ENCODE measurements at regions of chr19 and their contacts with region 1.

Region 1: GRCh38 chr19:49676690-49677231 is 310 bp upstream of the PRMT1 start:
- DNase-seq: peak; percentile 84 to 99 (median 97)
- ATAC-seq: peak; percentile 87
- H3K4me3 ChIP-seq: peak overlapping the region; percentile 86
- H3K4me3 Mint-ChIP-seq: peak overlapping the region; percentile 91 to 100 (median 98)
- H3K27ac ChIP-seq: peak overlapping the region; percentile 95
- H3K27ac Mint-ChIP-seq: peak overlapping the region; percentile 93 to 100 (median 99)
- H3K4me1 ChIP-seq: peaks cover 18 to 23% of the 10 kb centered on the region in 2 donors
- H3K4me1 Mint-ChIP-seq: peaks cover 18 to 50% (median 43%) of the 10 kb centered on the region in 7 donors
- H3K27me3 ChIP-seq: no peaks in the 10 kb centered on the region
- H3K27me3 Mint-ChIP-seq: no peaks in the 10 kb centered on the region

Region 2: DNA sequence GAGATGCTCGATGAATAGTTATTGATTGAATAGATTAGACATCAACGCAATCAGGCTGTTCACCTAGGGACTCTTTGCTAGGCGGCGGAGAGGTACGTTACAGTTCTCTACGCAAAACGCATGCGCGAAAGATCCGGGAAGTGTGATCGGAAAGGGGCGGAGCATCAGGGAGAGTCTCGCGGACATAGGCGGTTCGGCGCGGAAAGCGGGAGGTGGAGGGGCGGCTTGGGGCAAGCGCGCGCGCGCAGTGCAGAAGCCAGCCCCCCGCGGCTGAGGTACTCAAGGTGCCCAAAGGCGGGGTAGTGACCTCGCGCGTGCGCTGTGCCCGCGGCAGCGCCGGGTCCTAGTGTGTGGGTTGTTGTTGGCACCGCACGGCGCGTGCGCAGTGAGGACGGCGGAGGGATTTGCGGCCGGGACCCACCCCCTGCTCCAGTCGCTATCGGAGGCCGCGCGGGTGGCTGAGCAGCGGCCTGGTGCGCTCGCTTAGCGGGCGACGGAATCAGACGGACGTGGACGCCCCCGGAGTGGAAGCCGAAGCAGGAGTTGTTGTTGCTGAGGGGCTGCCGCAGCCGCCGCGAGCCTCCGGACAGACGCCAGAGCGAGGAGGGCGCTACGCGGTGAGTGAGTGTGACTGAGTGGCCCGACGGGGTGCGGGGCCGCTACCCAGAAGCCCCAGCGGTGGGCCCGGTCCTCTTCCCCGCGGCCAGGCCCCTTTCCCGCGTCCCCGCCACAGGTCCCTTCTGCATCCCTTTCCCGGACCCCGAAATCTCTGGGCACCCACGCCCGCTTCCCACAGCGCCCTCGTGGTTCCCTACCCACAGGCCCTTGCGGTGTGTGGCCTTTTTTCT is 591.5 kb before region 1 on chr19 and contains the start of gene SNRNP70:
- CTCF ChIA-PET with region 1: no interaction called
- POLR2A ChIA-PET with region 1: no interaction called
- intact Hi-C with region 1: loop called in 1 of 2 experiments (anchors 1 kb)
- DNase-seq: peak; percentile 99 to 100 (median 100)
- ATAC-seq: peak; percentile 97
- H3K4me3 ChIP-seq: peak within 1 kb of the TSS; percentile 72
- H3K4me3 Mint-ChIP-seq: peak within 1 kb of the TSS; percentile 71 to 97 (median 94)
- H3K27ac ChIP-seq: peak within 1 kb of the TSS; percentile 94
- H3K27ac Mint-ChIP-seq: peak within 1 kb of the TSS; percentile 83 to 96 (median 88)
- H3K4me1 ChIP-seq: peaks cover 19% of the 10 kb centered on the region in 2 donors
- H3K4me1 Mint-ChIP-seq: peaks cover 18 to 49% (median 35%) of the 10 kb centered on the region in 7 donors
- H3K27me3 ChIP-seq: no peaks in the 10 kb centered on the region
- H3K27me3 Mint-ChIP-seq: peaks cover 0 to 5% (median 4%) of the 10 kb centered on the region in 5 donors
- total RNA-seq, gene SNRNP70: 243 to 837 (median 449) TPM

Region 3: DNA sequence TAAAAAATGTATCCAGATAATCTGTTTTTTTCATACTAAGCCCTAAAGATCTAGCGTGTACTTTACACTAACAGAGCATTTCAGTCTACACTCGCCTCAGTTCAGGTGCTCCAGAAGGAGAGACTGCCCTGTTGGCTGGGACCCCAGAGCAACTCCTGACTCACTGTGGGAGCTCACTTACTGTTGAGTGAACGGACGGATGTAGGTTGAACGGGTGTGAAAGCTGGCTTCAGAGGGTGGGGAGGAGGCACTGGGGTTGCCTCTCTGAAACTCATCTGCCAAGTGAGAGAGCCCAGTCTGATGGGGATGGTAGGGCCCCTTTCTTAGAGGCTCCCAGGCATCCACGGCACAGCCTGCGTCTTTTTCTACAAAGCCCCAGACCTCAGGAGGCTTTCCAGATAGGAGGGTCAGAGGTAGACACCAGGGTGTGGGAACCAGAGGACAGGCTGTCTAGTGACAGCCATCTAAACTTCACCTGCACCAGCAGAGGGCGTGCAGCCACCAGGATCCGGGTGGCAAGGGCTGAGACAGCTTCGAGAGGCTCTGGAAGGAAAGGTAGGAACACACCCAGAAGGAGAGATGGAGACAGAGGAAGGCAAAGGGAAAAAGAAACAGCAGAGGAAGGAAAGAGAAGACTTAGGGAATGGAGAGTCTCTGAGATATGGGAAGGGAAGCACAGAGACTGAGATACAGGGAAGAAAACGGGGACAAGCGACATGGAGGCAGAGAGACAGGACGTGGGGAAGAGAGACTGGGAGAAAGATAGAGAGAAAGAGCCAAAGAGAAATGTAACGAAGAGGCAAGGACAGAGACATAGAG is 285.0 kb before region 1 on chr19:
- CTCF ChIA-PET with region 1: interaction called, 3 read pairs
- POLR2A ChIA-PET with region 1: no interaction called
- intact Hi-C with region 1: loop called (anchors 1 to 5 kb)
- DNase-seq: peak; percentile 61 to 82 (median 74)
- ATAC-seq: peak; percentile 89
- H3K4me3 ChIP-seq: no peak overlapping the region
- H3K4me3 Mint-ChIP-seq: peak overlapping the region in 2 of 10 donors; percentile 3 to 51
- H3K27ac ChIP-seq: no peak overlapping the region
- H3K27ac Mint-ChIP-seq: peak overlapping the region in 6 of 9 donors; percentile 1 to 84 (median 54)
- H3K4me1 ChIP-seq: peaks cover 7 to 13% of the 10 kb centered on the region in 2 donors
- H3K4me1 Mint-ChIP-seq: peaks cover 6 to 26% (median 10%) of the 10 kb centered on the region in 7 donors
- H3K27me3 ChIP-seq: no peaks in the 10 kb centered on the region
- H3K27me3 Mint-ChIP-seq: peaks cover 0 to 11% (median 3%) of the 10 kb centered on the region in 5 donors

Region 4: DNA sequence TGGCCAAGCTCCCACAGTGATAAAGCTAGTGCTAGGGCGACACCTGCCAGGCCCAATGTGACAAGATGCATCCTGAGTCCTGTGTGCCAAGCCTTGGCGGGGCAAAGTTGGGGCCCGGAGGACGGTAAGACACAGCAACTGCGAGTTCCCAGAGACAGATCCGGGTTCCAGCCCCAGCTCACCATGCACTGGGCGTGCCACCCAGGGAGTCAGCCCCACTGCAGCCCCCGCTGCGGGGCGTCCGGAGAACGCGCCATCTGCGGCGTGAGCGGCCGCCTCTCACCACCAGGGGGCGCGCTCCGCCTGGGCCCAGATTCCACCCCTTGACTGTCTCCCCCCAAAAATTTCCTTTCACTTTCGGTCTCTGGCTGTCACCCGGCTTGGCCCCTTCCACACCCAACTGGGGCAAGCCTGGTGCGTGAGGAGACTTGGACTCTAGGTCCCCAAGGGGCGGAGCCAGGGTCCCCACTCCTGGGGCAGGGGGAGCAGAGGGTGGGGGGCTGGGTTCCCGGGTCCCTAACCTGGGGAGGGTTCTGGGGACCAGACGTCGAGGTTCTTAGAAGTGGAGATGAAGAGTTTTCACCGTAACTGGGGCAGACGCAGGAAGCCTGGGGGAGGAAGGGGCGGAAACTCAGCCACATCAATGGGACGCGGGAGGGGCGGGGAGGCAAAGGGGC is 202.8 kb before region 1 on chr19 and contains the start of gene FLT3LG:
- CTCF ChIA-PET with region 1: interaction called, 7 read pairs
- POLR2A ChIA-PET with region 1: interaction called, 6 read pairs
- intact Hi-C with region 1: loop called (anchors 1 kb)
- DNase-seq: peak; percentile 91 to 98 (median 96)
- ATAC-seq: peak; percentile 72
- H3K4me3 ChIP-seq: peak within 1 kb of the TSS; percentile 87
- H3K4me3 Mint-ChIP-seq: peak within 1 kb of the TSS; percentile 91 to 100 (median 96)
- H3K27ac ChIP-seq: peak within 1 kb of the TSS; percentile 99
- H3K27ac Mint-ChIP-seq: peak within 1 kb of the TSS; percentile 95 to 100 (median 98)
- H3K4me1 ChIP-seq: peaks cover 50 to 52% of the 10 kb centered on the region in 2 donors
- H3K4me1 Mint-ChIP-seq: peaks cover 18 to 62% (median 51%) of the 10 kb centered on the region in 7 donors
- H3K27me3 ChIP-seq: no peaks in the 10 kb centered on the region
- H3K27me3 Mint-ChIP-seq: no peaks in the 10 kb centered on the region
- total RNA-seq, gene FLT3LG: 90.6 to 401 (median 280) TPM

Region 5: GRCh38 chr19:49570138-49570856 is 106.5 kb before region 1 on chr19:
- CTCF ChIA-PET with region 1: interaction called, 13 read pairs
- POLR2A ChIA-PET with region 1: interaction called, 34 read pairs
- intact Hi-C with region 1: loop called (anchors 1 to 2 kb)
- DNase-seq: peak in 7 of 9 donors; percentile 75 to 88 (median 83)
- ATAC-seq: peak; percentile 64
- H3K4me3 ChIP-seq: no peak overlapping the region
- H3K4me3 Mint-ChIP-seq: peak overlapping the region; percentile 64 to 80 (median 75)
- H3K27ac ChIP-seq: peak overlapping the region; percentile 56
- H3K27ac Mint-ChIP-seq: peak overlapping the region; percentile 86 to 99 (median 93)
- H3K4me1 ChIP-seq: peaks cover 37 to 53% of the 10 kb centered on the region in 2 donors
- H3K4me1 Mint-ChIP-seq: peaks cover 34 to 70% (median 61%) of the 10 kb centered on the region in 7 donors
- H3K27me3 ChIP-seq: no peaks in the 10 kb centered on the region
- H3K27me3 Mint-ChIP-seq: peaks cover 0 to 2% (median 0%) of the 10 kb centered on the region in 5 donors

Region 6: DNA sequence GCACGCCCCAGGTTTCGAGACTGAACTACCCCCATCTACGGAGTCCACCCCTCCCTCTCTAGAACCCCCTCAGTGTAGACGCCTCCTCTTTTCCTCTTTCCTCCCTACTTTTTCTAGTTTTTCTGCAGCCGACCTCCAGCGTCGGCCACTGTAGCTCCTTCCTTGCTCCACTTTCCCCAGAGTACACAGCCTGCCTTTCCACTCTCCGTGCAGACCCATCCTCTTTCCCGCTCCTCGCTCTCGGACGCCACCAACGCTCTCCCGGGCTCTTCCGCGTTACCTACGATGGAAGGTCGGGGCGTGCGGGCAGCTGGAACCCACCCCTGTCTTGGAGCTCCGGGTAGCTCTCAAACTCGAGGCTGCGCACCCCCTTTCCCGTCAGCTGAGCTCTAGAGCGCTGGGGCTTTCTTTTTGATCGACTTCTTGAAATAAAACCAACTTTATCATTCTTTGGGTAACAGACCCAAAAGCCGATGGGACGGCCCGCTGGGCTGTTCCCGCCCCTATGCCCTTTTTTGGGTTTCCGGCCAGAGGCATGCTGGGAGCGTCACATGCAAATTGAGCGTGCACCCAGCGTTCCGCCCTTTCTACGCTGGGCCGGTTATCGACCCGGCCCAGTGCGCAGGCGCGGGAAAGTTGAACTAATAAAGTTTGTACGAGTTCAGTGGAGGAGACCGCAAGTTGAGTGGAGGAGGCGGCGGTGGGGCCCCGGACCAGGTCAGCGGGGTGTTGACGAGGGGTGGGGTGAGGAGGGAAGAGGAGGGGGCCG is 11.2 kb before region 1 on chr19 and contains the starts of genes BCL2L12 and IRF3:
- CTCF ChIA-PET with region 1: interaction called, 4 read pairs
- POLR2A ChIA-PET with region 1: interaction called, 91 read pairs
- intact Hi-C with region 1: loop called (anchors 1 kb)
- DNase-seq: peak; percentile 99
- ATAC-seq: peak; percentile 90
- H3K4me3 ChIP-seq: peak within 1 kb of the TSS; percentile 95
- H3K4me3 Mint-ChIP-seq: peak within 1 kb of the TSS; percentile 97 to 100 (median 99)
- H3K27ac ChIP-seq: peak within 1 kb of the TSS; percentile 80
- H3K27ac Mint-ChIP-seq: peak within 1 kb of the TSS; percentile 96 to 99 (median 97)
- H3K4me1 ChIP-seq: peaks cover 23% of the 10 kb centered on the region in 2 donors
- H3K4me1 Mint-ChIP-seq: peaks cover 24 to 47% (median 39%) of the 10 kb centered on the region in 7 donors
- H3K27me3 ChIP-seq: no peaks in the 10 kb centered on the region
- H3K27me3 Mint-ChIP-seq: peaks cover 0 to 2% (median 0%) of the 10 kb centered on the region in 5 donors
- total RNA-seq, gene BCL2L12: 11.3 to 57.2 (median 22.6) TPM
- total RNA-seq, gene IRF3: 176 to 346 (median 212) TPM

Region 7: DNA sequence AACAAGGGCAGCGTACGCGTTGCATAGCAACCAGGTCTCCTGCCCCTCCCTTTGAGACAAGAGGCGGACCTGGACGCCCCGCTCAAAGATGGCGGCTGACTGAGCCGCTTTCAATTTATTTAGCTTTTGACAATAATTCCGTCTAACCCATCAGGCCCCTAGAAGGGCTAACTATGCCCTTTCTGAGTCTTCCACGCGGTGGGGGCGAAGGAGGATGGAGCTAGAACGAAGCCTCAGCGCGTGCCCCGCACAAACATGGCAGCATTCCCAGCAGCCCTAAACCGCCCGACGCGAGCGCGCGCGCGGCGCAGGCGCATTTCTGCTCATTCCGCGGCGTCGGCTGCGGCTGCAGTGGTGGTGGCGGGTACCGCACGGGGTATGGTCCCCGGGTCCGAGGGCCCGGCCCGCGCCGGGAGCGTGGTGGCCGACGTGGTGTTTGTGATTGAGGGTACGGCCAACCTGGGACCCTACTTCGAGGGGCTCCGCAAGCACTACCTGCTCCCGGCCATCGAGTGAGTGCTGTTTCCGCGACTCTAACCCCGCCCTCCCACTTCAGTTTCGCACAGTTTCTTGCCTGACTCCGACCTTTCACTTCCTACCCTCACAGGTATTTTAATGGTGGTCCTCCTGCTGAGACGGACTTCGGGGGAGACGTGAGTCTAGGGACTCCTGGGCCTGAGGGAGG is 141.3 kb after region 1 on chr19 and contains the start of gene MED25:
- CTCF ChIA-PET with region 1: no interaction called
- POLR2A ChIA-PET with region 1: no interaction called
- intact Hi-C with region 1: loop called (anchors 1 to 5 kb)
- DNase-seq: peak; percentile 87 to 96 (median 94)
- ATAC-seq: peak; percentile 65
- H3K4me3 ChIP-seq: peak within 1 kb of the TSS; percentile 91
- H3K4me3 Mint-ChIP-seq: peak within 1 kb of the TSS; percentile 94 to 100 (median 98)
- H3K27ac ChIP-seq: peak within 1 kb of the TSS; percentile 88
- H3K27ac Mint-ChIP-seq: peak within 1 kb of the TSS; percentile 96 to 100 (median 100)
- H3K4me1 ChIP-seq: peaks cover 11 to 17% of the 10 kb centered on the region in 2 donors
- H3K4me1 Mint-ChIP-seq: peaks cover 20 to 51% (median 39%) of the 10 kb centered on the region in 7 donors
- H3K27me3 ChIP-seq: no peaks in the 10 kb centered on the region
- H3K27me3 Mint-ChIP-seq: no peaks in the 10 kb centered on the region
- total RNA-seq, gene MED25: 36.8 to 75.2 (median 55.4) TPM

Region 8: GRCh38 chr19:51002542-51003171 is 1325.9 kb after region 1 on chr19:
- CTCF ChIA-PET with region 1: no interaction called
- POLR2A ChIA-PET with region 1: no interaction called
- intact Hi-C with region 1: no loop called
- DNase-seq: no peak
- ATAC-seq: no peak
- H3K4me3 ChIP-seq: no peak overlapping the region
- H3K4me3 Mint-ChIP-seq: peak overlapping the region in 1 of 10 donors; percentile 53
- H3K27ac ChIP-seq: no peak overlapping the region
- H3K27ac Mint-ChIP-seq: no peak overlapping the region
- H3K4me1 ChIP-seq: no peaks in the 10 kb centered on the region
- H3K4me1 Mint-ChIP-seq: peaks cover 0 to 5% (median 0%) of the 10 kb centered on the region in 7 donors
- H3K27me3 ChIP-seq: peaks cover 0 to 6% of the 10 kb centered on the region in 2 donors
- H3K27me3 Mint-ChIP-seq: peaks cover 0 to 59% (median 51%) of the 10 kb centered on the region in 5 donors